Naive thymus-derived CD4-positive, alpha-beta T cell (primary cell): ENCODE measurements at regions of chr9 and their contacts with region 1.

Region 1: GRCh38 chr9:91089405-91090129 is 272.2 kb downstream of the AUH start:
- DNase-seq: no peak
- ATAC-seq: no peak
- H3K4me3 ChIP-seq: no peak overlapping the region
- H3K4me3 Mint-ChIP-seq: peak overlapping the region in 1 of 10 donors; percentile 15
- H3K27ac ChIP-seq: no peak overlapping the region
- H3K27ac Mint-ChIP-seq: peak overlapping the region in 2 of 9 donors; percentile 21 to 28
- H3K4me1 ChIP-seq: no peaks in the 10 kb centered on the region
- H3K4me1 Mint-ChIP-seq: peaks cover 0 to 53% (median 0%) of the 10 kb centered on the region in 7 donors
- H3K27me3 ChIP-seq: no peaks in the 10 kb centered on the region
- H3K27me3 Mint-ChIP-seq: peaks cover 0 to 4% (median 0%) of the 10 kb centered on the region in 5 donors

Region 2: DNA sequence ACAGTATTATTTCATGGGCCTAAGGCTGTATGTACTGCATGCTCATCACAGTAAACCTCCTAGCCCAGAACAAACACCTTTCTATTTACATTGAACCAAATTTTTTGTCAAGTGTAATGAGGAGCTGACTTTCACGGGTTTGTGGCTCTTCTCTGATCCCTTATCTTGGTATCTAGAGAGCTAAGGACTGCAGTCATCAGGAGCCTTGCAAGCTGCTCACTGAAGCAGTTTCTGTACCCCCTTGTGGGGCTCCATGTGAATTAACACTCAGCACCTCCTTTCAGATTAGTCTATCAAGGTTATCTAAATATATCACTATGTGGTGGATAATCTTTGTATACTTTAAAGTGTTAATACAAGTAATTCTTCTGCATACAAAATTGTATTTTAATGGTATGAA is 163.9 kb after region 1 on chr9:
- CTCF ChIA-PET with region 1: no interaction called
- POLR2A ChIA-PET with region 1: no interaction called
- intact Hi-C with region 1: loop called in 1 of 2 experiments (anchors 2 kb)
- DNase-seq: peak in 6 of 9 donors; percentile 5 to 32 (median 12)
- ATAC-seq: peak; percentile 64
- H3K4me3 ChIP-seq: no peak overlapping the region
- H3K4me3 Mint-ChIP-seq: no peak overlapping the region
- H3K27ac ChIP-seq: no peak overlapping the region
- H3K27ac Mint-ChIP-seq: peak overlapping the region in 1 of 9 donors; percentile 23
- H3K4me1 ChIP-seq: peaks cover 0 to 8% of the 10 kb centered on the region in 2 donors
- H3K4me1 Mint-ChIP-seq: peaks cover 0 to 45% (median 6%) of the 10 kb centered on the region in 7 donors
- H3K27me3 ChIP-seq: no peaks in the 10 kb centered on the region
- H3K27me3 Mint-ChIP-seq: no peaks in the 10 kb centered on the region